H1 (cell line): ENCODE measurements at regions of chr2 and their contacts with region 1.

Region 1: DNA sequence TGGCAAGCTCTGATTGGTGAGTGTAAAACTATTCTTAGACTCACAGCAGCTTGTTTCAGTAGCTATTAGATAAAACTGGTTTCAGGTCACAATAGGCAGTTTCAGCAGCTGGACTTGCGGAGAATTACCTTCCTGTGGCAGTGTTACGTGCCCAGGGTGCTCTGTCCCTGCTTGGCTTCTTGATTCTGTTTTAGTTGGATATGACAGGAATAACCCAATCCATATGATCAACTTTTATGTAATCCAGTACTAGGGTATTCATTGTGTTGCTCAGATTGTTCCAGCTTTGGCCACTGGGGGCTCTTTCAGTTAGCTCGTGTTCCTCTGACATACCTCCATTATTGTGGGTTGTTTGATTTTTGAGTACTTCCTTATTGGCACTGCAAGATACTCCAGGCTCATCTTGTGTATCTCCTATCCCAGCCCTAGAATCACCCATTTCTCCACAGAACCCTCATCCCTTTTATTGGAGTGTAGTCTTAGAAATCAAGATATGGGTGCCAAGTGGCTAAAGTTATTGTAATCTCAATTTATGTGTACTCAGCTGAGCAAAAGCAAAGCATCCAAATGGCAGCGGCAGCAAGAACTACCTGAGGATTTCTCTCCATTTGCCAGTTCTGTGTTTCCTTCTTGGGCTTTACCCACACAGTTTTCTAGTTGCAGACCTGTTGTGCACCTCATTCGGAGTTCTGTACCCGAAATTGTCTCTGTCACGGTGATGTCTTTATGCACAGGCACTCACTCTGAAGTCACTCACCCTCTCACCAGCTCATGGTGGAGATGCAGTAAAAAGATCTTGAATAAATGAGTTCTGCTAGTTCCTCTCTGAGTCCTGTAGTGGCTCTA is 43.4 kb downstream of the INPP4A start:
- DNase-seq: no peak
- H3K4me3 ChIP-seq: no peak overlapping the region
- H3K27ac ChIP-seq: no peak overlapping the region
- H3K4me1 ChIP-seq: peaks cover 6 to 18% (median 12%) of the 10 kb centered on the region in 4 experiments; a peak in 6 of 7 replicates
- H3K27me3 ChIP-seq: no peaks in the 10 kb centered on the region
- CTCF ChIP-seq: peak in 2 of 3 experiments; percentile 41 to 64; a peak in 3 of 4 replicates
- EP300 ChIP-seq: no peak
- POLR2A ChIP-seq: no peak
- RAD21 ChIP-seq: peak; percentile 4 to 46; a peak in 2 of 4 replicates

Region 2: GRCh38 chr2:98205889-98206288 is 282.1 kb before region 1 on chr2:
- CTCF ChIA-PET with region 1: no interaction called
- POLR2A ChIA-PET with region 1: no interaction called
- DNase-seq: no peak
- H3K4me3 ChIP-seq: no peak overlapping the region
- H3K27ac ChIP-seq: no peak overlapping the region
- H3K4me1 ChIP-seq: no peaks in the 10 kb centered on the region
- H3K27me3 ChIP-seq: no peaks in the 10 kb centered on the region
- CTCF ChIP-seq: no peak
- EP300 ChIP-seq: no peak
- POLR2A ChIP-seq: no peak
- RAD21 ChIP-seq: no peak

Region 3: DNA sequence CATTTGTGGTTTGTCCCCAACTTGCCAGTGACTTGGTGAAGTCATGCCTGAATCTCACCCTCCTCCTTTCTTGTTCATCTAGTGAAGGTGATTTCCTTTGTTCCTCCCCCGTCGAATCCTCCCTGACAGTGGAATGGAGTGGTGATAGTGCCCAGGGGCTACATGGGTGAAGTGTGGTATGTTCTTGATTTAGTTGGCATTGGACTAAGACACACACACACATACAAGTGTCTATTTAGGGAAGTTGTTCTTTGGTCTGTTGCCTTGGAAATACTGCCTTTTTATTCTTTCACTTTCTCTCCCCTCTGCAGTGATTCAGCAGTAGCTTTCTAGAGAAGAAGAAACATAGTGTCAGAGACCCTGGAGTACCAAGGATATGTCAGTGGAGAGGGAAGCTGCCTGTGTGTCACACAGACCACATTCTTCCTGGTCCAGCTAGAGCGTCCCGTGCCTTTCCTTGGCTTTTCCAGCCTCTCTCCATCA is 32.5 kb before region 1 on chr2:
- CTCF ChIA-PET with region 1: interaction called, 10 read pairs
- POLR2A ChIA-PET with region 1: no interaction called
- DNase-seq: peak in 1 of 2 experiments; percentile 16
- H3K4me3 ChIP-seq: no peak overlapping the region
- H3K27ac ChIP-seq: peak overlapping the region; percentile 38
- H3K4me1 ChIP-seq: peaks cover 11 to 43% (median 25%) of the 10 kb centered on the region in 4 experiments
- H3K27me3 ChIP-seq: no peaks in the 10 kb centered on the region
- CTCF ChIP-seq: no peak
- EP300 ChIP-seq: no peak
- POLR2A ChIP-seq: no peak
- RAD21 ChIP-seq: no peak

Region 4: GRCh38 chr2:98476192-98476868 is 11.7 kb before region 1 on chr2:
- CTCF ChIA-PET with region 1: interaction called, 27 read pairs
- POLR2A ChIA-PET with region 1: no interaction called
- DNase-seq: no peak
- H3K4me3 ChIP-seq: no peak overlapping the region
- H3K27ac ChIP-seq: no peak overlapping the region
- H3K4me1 ChIP-seq: peaks cover 4 to 26% (median 21%) of the 10 kb centered on the region in 4 experiments
- H3K27me3 ChIP-seq: no peaks in the 10 kb centered on the region
- CTCF ChIP-seq: no peak
- EP300 ChIP-seq: no peak
- POLR2A ChIP-seq: no peak
- RAD21 ChIP-seq: no peak

Region 5: GRCh38 chr2:98515250-98515991 is 27.4 kb after region 1 on chr2:
- CTCF ChIA-PET with region 1: interaction called, 20 read pairs
- POLR2A ChIA-PET with region 1: no interaction called
- DNase-seq: no peak
- H3K4me3 ChIP-seq: no peak overlapping the region
- H3K27ac ChIP-seq: no peak overlapping the region
- H3K4me1 ChIP-seq: peaks cover 0 to 3% (median 0%) of the 10 kb centered on the region in 4 experiments; a peak in 3 of 7 replicates
- H3K27me3 ChIP-seq: no peaks in the 10 kb centered on the region
- CTCF ChIP-seq: no peak
- EP300 ChIP-seq: no peak
- POLR2A ChIP-seq: no peak
- RAD21 ChIP-seq: no peak